Heart left ventricle (tissue), 16 donors: ENCODE measurements at regions of chr7 and their contacts with region 1.

Region 1: DNA sequence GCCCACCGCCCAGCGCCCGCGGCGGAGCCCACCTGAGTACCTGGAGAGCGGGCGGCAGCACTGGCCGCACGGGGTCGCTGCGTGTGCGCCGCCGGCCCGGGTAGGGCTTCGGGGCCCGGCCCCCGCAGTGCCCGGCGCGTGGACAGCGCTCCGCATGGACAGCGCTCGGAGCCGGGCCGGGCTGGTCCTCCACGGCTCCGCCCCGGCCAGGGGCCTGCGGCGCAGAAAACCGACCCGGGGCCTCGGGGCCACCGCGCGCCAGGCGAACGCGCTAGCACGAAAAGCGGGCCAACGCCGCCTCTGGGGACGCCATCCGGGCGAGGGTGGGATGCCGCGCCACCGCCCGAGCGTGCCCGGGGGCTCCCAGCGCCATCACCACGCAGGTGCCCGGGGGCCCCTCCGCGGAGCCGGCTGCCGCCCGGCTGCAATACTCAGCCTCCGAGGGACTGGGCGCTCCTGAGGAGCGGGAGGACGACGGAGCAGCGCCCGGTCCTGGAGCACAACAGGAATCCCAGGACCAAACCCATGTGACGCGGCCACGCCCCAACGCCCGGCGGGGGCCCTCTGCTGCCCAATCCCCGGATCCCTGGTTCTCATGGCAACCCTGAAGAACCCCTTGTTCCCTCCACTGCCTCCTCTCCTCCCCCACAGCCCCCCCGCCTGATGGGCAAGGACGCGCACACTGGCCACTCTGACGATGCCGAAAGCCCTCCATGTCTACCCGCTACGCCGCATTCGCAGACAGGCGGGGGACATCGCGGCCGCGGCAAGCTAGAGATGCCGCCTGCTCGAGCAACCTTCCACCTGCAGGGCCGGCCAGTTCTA is at the start of gene GRB10:
- DNase-seq: peak in 4 of 5 donors; percentile 34 to 51 (median 48)
- ATAC-seq: peak; percentile 32 to 87 (median 69)
- H3K4me3 ChIP-seq: peak within 1 kb of the TSS; percentile 29 to 70 (median 58)
- H3K27ac ChIP-seq: peak within 1 kb of the TSS in 6 of 12 donors; percentile 39 to 61 (median 52)
- H3K4me1 ChIP-seq: peaks cover 0 to 63% (median 36%) of the 10 kb centered on the region in 12 donors
- H3K27me3 ChIP-seq: peaks cover 0 to 6% (median 0%) of the 10 kb centered on the region in 9 donors
- CTCF ChIP-seq: peak in 10 of 12 donors; percentile 16 to 52 (median 34)
- POLR2A ChIP-seq: no peak
- total RNA-seq, gene GRB10: 20.4 to 38.2 (median 29.1) TPM

Region 2: GRCh38 chr7:50733555-50733954 is 49.0 kb before region 1 on chr7:
- intact Hi-C with region 1: loop called in 1 of 10 experiments (anchors 5 kb)
- DNase-seq: no peak
- ATAC-seq: peak in 1 of 4 donors; percentile 17
- H3K4me3 ChIP-seq: no peak overlapping the region
- H3K27ac ChIP-seq: no peak overlapping the region
- H3K4me1 ChIP-seq: peaks cover 0 to 50% (median 34%) of the 10 kb centered on the region in 12 donors
- H3K27me3 ChIP-seq: no peaks in the 10 kb centered on the region
- CTCF ChIP-seq: no peak
- POLR2A ChIP-seq: no peak

Region 3: GRCh38 chr7:51060536-51060935 is 277.9 kb after region 1 on chr7:
- intact Hi-C with region 1: loop called in 4 of 10 experiments (anchors 5 kb)
- DNase-seq: no peak
- ATAC-seq: peak in 1 of 4 donors; percentile 29
- H3K4me3 ChIP-seq: no peak overlapping the region
- H3K27ac ChIP-seq: no peak overlapping the region
- H3K4me1 ChIP-seq: peaks cover 0 to 4% (median 0%) of the 10 kb centered on the region in 12 donors
- H3K27me3 ChIP-seq: no peaks in the 10 kb centered on the region
- CTCF ChIP-seq: peak in 3 of 12 donors; percentile 8 to 25 (median 10)
- POLR2A ChIP-seq: no peak